ENCODE measurements at regions of chr9 and their contacts with region 1.

Region 1: GRCh38 chr9:113785334-113785733 is 90.8 kb upstream of the ZNF618 start:
- DNase-seq: no peak
- H3K4me3 ChIP-seq: no peak overlapping the region
- H3K27ac ChIP-seq: no peak overlapping the region
- H3K4me1 ChIP-seq: no peaks in the 10 kb centered on the region
- H3K27me3 ChIP-seq: peaks cover 20 to 21% of the 10 kb centered on the region in 2 experiments
- CTCF ChIP-seq: no peak
- POLR2A ChIP-seq: no peak

Region 2: DNA sequence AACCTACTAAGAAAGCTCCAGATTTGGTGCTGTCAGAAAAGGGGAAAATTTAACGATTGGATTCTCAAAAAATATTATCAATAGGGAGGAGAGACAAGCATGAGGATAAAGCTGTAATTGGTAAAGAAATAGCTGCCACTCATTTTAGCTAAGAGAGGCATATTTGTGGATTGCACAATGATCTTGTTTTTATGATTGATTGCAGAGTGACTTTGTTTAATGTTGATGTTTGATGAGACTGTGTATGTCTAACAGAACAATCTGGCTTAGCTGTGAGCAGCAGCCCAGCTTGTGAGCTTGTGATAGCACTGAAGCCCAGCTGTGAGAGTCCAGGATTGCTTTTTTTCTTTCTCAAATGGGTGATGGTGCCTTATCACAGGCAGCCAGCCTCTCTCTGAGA is 829.8 kb before region 1 on chr9:
- CTCF ChIA-PET with region 1: no interaction called
- POLR2A ChIA-PET with region 1: no interaction called
- dilution Hi-C with region 1: no loop called
- intact Hi-C with region 1: no loop called
- DNase-seq: no peak
- H3K4me3 ChIP-seq: no peak overlapping the region
- H3K27ac ChIP-seq: no peak overlapping the region
- H3K4me1 ChIP-seq: no peaks in the 10 kb centered on the region
- H3K27me3 ChIP-seq: peaks cover 0 to 2% of the 10 kb centered on the region in 2 experiments
- CTCF ChIP-seq: no peak
- POLR2A ChIP-seq: no peak

Region 3: DNA sequence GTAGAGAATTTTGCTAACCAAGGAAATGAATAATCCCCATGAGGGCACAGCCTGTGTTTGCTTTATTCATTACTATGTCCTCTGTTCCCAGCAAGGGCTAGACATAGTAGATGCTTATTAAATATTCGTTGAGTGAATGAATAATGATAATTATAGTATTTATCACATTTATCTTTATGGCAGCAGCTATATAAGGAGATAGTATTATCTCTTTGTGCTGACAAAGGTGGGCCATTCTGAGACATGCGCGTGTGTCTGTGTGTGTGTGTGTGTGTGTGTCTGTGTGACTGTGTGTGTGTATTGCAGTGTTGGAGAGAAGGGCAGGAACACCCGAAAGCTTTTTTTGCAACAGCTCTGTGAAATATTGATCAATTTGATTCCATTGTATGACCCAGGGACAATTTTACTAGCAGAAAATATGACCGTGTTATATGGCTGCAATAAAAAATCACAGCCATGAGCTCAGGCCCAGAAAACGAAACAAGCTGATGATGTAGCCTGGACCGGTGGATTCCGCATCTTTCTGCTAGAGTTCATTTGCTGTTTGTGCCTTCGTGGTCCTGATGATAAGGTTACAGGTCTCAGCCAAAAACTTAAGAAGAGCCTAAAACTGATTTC is 130.6 kb after region 1 on chr9:
- CTCF ChIA-PET with region 1: no interaction called
- POLR2A ChIA-PET with region 1: interaction called, 10 read pairs
- dilution Hi-C with region 1: no loop called
- intact Hi-C with region 1: no loop called
- DNase-seq: no peak
- H3K4me3 ChIP-seq: no peak overlapping the region
- H3K27ac ChIP-seq: no peak overlapping the region
- H3K4me1 ChIP-seq: no peaks in the 10 kb centered on the region
- H3K27me3 ChIP-seq: no peaks in the 10 kb centered on the region
- CTCF ChIP-seq: no peak
- POLR2A ChIP-seq: no peak